CD4-positive, alpha-beta memory T cell (primary cell): ENCODE measurements at regions of chr20 and their contacts with region 1.

Region 1: GRCh38 chr20:3209257-3209945 is at the start of gene ITPA:
- DNase-seq: peak; percentile 43 to 54 (median 49)
- H3K4me3 ChIP-seq: peak within 1 kb of the TSS; percentile 70 to 89
- H3K4me3 Mint-ChIP-seq: peak within 1 kb of the TSS; percentile 84 to 97 (median 94)
- H3K27ac ChIP-seq: peak within 1 kb of the TSS; percentile 72
- H3K27ac Mint-ChIP-seq: peak within 1 kb of the TSS; percentile 64 to 97 (median 95)
- H3K4me1 ChIP-seq: peaks cover 27% of the 10 kb centered on the region
- H3K4me1 Mint-ChIP-seq: peaks cover 19 to 45% (median 25%) of the 10 kb centered on the region in 4 donors
- H3K27me3 ChIP-seq: no peaks in the 10 kb centered on the region
- H3K27me3 Mint-ChIP-seq: no peaks in the 10 kb centered on the region
- total RNA-seq, gene ITPA: 46.7 to 46.8 TPM

Region 2: GRCh38 chr20:3045816-3046676 is 163.4 kb before region 1 on chr20 and contains the start of gene MRPS26:
- CTCF ChIA-PET with region 1: no interaction called
- POLR2A ChIA-PET with region 1: interaction called, 13 read pairs
- intact Hi-C with region 1: loop called (anchors 5 kb)
- DNase-seq: peak; percentile 71 to 82 (median 79)
- H3K4me3 ChIP-seq: peak within 1 kb of the TSS; percentile 66 to 95
- H3K4me3 Mint-ChIP-seq: peak within 1 kb of the TSS; percentile 81 to 92 (median 89)
- H3K27ac ChIP-seq: peak within 1 kb of the TSS; percentile 62
- H3K27ac Mint-ChIP-seq: peak within 1 kb of the TSS; percentile 73 to 94 (median 80)
- H3K4me1 ChIP-seq: peaks cover 26% of the 10 kb centered on the region
- H3K4me1 Mint-ChIP-seq: peaks cover 13 to 30% (median 15%) of the 10 kb centered on the region in 4 donors
- H3K27me3 ChIP-seq: no peaks in the 10 kb centered on the region
- H3K27me3 Mint-ChIP-seq: no peaks in the 10 kb centered on the region
- total RNA-seq, gene MRPS26: 31.6 to 32.2 TPM

Region 3: DNA sequence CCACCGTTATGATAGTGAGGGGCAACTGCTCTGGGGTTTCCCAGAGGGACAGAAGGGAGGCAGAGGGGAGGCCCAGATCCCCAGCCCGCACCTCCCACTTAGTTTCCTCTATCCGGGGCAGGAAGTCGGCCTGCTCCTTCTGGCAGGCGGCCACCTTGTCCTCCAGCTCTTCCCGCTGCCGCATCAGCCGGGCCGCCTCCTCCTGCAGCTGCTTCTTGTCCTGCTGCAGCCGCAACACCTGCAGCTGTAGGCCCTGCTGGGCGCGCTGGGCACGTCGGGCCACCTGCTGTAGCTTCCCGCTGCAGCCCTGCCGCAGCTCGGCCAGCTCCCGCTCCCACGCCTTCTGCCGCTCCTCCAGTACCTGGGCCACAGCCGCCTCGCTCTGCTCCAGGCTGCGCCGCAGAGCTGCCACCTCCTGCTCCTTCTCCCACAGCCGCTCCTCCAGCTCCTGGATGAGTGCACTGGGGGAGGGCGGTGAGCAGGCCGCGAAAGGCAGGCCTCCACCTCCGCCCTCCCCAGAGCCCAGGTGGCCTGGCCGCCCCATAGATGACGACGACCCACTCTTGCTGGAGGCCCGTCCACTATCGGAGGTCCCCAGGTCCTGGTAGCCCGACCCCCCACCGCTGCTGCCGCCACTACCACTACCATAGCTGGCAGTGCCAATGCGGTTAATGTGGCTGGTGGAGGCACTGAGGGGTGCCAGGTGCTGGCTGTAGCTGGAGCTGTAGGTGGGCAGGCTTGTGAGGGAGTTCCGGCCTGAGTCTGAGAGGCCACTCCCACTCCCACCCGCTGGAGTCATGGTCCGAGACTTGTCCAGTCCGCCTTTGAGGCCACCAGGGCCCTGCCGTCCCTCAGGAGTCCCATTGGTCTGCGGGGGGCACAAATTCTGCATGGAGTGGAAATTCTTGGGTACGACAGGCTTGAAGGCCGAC is 43.7 kb before region 1 on chr20:
- CTCF ChIA-PET with region 1: no interaction called
- POLR2A ChIA-PET with region 1: no interaction called
- intact Hi-C with region 1: no loop called
- DNase-seq: no peak
- H3K4me3 ChIP-seq: no peak overlapping the region
- H3K4me3 Mint-ChIP-seq: no peak overlapping the region
- H3K27ac ChIP-seq: no peak overlapping the region
- H3K27ac Mint-ChIP-seq: no peak overlapping the region
- H3K4me1 ChIP-seq: peaks cover under 1% of the 10 kb centered on the region
- H3K4me1 Mint-ChIP-seq: peaks cover 0 to 16% (median under 1%) of the 10 kb centered on the region in 4 donors
- H3K27me3 ChIP-seq: peaks cover 7% of the 10 kb centered on the region
- H3K27me3 Mint-ChIP-seq: peaks cover 14% of the 10 kb centered on the region in 2 donors

Region 4: GRCh38 chr20:3239026-3239866 is 29.8 kb after region 1 on chr20 and contains the start of gene SLC4A11:
- CTCF ChIA-PET with region 1: no interaction called
- POLR2A ChIA-PET with region 1: interaction called, 15 read pairs
- intact Hi-C with region 1: no loop called
- DNase-seq: peak in 3 of 5 donors; percentile 18 to 32 (median 29)
- H3K4me3 ChIP-seq: peak within 1 kb of the TSS; percentile 29 to 59
- H3K4me3 Mint-ChIP-seq: peak within 1 kb of the TSS; percentile 86 to 95 (median 92)
- H3K27ac ChIP-seq: no peak within 1 kb of the TSS
- H3K27ac Mint-ChIP-seq: peak within 1 kb of the TSS in 4 of 7 donors; percentile 30 to 79 (median 54)
- H3K4me1 ChIP-seq: peaks cover 14% of the 10 kb centered on the region
- H3K4me1 Mint-ChIP-seq: peaks cover 2 to 23% (median 9%) of the 10 kb centered on the region in 4 donors
- H3K27me3 ChIP-seq: peaks cover 34% of the 10 kb centered on the region
- H3K27me3 Mint-ChIP-seq: peaks cover 15 to 32% of the 10 kb centered on the region in 2 donors
- total RNA-seq, gene SLC4A11: 0.35 to 0.83 TPM